ENCODE measurements at regions of chr12 and their contacts with region 1.

Region 1: GRCh38 chr12:8890313-8891085 is 23.8 kb upstream of the PHC1 start:
- DNase-seq: peak; percentile 10
- H3K4me3 ChIP-seq: peak overlapping the region; percentile 61
- H3K27ac ChIP-seq: no peak overlapping the region
- H3K27me3 ChIP-seq: no peaks in the 10 kb centered on the region
- CTCF ChIP-seq: peak; percentile 92

Region 2: DNA sequence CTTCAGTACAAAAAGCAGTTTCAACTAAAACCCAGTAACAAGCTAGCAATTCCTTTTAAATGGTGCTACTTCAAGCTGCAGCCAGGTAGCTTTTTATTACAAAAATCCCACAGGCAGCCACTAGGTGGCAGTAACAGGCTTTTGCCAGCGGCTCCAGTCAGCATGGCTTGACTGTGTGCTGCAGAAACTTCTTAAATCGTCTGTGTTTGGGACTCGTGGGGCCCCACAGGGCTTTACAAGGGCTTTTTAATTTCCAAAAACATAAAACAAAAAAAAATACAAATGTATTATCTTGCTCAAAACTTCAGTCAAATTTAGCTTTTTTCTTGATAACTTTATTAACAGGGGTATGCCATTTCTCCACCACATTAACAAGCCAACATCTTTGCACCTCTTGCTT is 346.2 kb before region 1 on chr12:
- CTCF ChIA-PET with region 1: interaction called, 12 read pairs
- POLR2A ChIA-PET with region 1: no interaction called
- DNase-seq: peak; percentile 26
- H3K4me3 ChIP-seq: no peak overlapping the region
- H3K27ac ChIP-seq: no peak overlapping the region
- H3K27me3 ChIP-seq: no peaks in the 10 kb centered on the region
- CTCF ChIP-seq: peak; percentile 94

Region 3: DNA sequence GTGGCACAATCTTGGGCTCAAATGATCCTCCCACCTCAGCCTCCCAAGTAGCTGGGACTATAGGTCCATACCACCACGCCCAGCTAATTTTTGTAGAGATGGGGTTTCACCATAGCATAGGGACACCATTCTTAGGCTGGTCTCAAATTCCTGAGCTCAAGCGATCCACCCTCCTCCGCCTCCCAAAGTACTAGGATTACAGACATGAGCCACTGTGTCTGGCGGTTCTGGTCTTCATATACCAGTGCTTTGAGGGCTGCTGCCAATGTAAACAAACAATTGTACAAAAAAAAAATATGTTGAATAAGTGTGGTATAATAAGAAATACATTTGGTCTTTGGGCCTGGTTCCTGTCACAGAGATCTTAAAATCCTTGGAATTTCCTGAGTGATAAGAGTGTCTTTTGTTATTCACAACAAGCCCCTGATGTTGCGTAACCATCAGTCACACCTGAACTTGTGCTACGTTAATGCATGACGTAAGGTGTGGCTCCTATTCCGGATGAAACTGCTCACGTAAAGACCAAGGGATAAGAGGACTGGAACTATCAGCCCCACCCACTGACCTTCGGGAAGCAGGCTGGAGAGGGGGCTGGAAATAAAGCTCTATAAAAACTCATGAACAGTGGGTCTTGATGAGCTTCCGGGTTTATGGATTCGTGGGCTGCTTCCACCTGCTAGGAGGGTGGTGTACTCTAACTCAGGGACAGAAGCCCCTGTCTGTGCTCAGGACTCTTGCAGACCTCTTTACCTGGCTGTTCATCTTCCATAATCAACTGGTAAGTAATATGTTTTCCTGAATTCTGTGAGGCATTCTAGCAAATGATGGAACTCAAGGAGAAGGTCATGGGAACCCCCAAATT is 209.2 kb before region 1 on chr12:
- CTCF ChIA-PET with region 1: interaction called, 138 read pairs
- POLR2A ChIA-PET with region 1: interaction called, 5 read pairs
- DNase-seq: no peak
- H3K4me3 ChIP-seq: no peak overlapping the region
- H3K27ac ChIP-seq: no peak overlapping the region
- H3K27me3 ChIP-seq: peaks cover 3% of the 10 kb centered on the region
- CTCF ChIP-seq: no peak

Region 4: DNA sequence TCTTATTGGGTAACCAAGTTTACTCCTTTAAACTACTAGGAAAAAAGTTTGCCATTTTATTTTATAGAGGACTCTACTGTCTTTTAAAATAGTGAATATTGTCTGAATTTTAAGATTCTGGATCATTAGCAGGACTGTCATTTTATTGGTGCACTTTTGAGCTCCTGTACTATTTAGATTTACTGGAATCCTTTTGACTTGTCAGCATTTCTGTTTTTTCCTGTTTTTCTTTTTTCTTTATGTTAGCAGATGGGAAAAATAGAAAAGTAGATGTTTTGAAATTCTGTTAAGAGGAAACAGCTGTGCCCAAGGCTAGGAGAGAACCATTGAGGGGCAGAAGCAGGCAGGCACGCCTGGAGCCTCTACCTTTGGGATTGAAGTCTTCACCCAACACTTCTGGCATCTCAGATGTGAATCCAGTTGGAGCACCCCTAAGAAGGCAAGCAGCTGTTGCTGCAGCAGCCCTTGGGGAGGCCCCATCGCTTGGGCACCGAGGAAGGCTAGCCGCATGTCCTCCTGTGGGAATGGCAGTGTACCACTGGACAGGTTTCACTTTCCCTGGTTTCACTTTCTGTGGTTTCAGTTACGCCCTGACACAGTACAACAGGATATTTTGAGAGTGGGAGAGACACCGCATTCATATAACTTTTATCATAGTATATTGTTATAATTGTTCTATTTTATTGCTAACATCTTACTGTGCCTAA is 181.2 kb before region 1 on chr12:
- CTCF ChIA-PET with region 1: interaction called, 15 read pairs
- POLR2A ChIA-PET with region 1: no interaction called
- DNase-seq: no peak
- H3K4me3 ChIP-seq: no peak overlapping the region
- H3K27ac ChIP-seq: no peak overlapping the region
- H3K27me3 ChIP-seq: no peaks in the 10 kb centered on the region
- CTCF ChIP-seq: no peak

Region 5: DNA sequence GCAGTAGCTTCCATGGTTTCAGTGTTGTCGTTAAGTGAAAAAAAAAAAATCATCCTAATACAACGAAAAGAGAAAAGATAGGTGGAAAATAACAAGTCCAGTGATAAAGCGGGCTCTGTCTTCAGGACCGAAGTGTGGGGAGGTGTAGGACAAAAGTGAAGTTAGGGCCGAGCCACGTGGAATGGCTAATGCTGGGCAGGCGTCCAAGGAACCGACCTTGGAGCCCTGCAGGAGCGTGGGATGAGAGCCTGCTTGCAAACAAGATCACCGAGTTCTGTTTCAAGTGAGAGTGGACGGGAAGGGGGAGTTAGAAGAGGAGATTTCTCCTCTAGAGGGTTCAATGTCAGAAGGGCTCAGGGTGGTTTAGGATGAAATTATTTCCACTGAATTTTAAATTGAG is 45.8 kb before region 1 on chr12:
- CTCF ChIA-PET with region 1: no interaction called
- POLR2A ChIA-PET with region 1: no interaction called
- DNase-seq: no peak
- H3K4me3 ChIP-seq: no peak overlapping the region
- H3K27ac ChIP-seq: no peak overlapping the region
- H3K27me3 ChIP-seq: peaks cover 3% of the 10 kb centered on the region
- CTCF ChIP-seq: no peak

Region 6: DNA sequence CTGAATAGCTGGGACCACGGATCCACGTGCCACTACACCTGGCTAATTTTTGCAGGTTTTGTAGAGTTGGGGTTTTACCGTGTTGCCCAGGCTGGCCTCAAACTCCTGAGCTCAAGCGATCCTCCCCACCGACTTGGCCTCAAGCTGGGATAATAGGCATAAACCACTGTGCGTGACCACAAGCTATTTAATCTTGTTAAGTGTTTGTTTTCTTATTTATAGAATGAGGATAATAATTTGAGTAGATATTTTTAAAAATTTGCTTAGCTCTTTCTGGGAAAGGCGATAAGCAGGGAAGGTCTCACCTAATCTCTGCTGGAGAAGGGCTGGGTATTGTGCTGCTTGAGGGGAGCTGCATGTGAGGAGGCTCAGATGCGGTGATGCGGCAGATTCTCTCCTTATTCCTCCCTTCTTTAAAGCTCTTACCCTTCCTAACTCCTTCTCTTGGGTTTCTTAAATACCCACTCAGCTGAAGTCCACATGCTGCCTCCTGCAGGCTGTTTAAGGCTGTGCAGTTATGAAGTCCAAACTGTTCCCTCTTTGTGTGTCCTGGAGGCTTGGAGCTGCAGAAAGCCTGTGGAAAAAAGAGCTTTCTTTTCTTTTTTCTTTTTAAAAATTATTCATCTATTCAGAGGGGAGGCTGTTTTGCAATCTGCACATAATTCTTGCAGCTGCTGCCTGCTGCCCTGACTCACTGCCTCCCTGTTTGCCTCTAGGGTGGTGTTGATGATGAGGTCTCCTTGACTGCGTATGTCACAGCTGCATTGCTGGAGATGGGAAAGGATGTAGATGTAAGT is 30.1 kb before region 1 on chr12:
- CTCF ChIA-PET with region 1: interaction called, 21 read pairs
- POLR2A ChIA-PET with region 1: no interaction called
- DNase-seq: no peak
- H3K4me3 ChIP-seq: no peak overlapping the region
- H3K27ac ChIP-seq: no peak overlapping the region
- H3K27me3 ChIP-seq: no peaks in the 10 kb centered on the region
- CTCF ChIP-seq: peak; percentile 66

Region 7: GRCh38 chr12:8912914-8913313 is 22.4 kb after region 1 on chr12:
- CTCF ChIA-PET with region 1: interaction called, 24 read pairs
- POLR2A ChIA-PET with region 1: no interaction called
- DNase-seq: no peak
- H3K4me3 ChIP-seq: no peak overlapping the region
- H3K27ac ChIP-seq: no peak overlapping the region
- H3K27me3 ChIP-seq: no peaks in the 10 kb centered on the region
- CTCF ChIP-seq: 0 out of 2 replicates have a peak, but pooled peaks have one; percentile 10

Region 8: GRCh38 chr12:9049520-9050133 is 159.1 kb after region 1 on chr12:
- CTCF ChIA-PET with region 1: interaction called, 20 read pairs
- POLR2A ChIA-PET with region 1: no interaction called
- DNase-seq: peak; percentile 11
- H3K4me3 ChIP-seq: no peak overlapping the region
- H3K27ac ChIP-seq: no peak overlapping the region
- H3K27me3 ChIP-seq: no peaks in the 10 kb centered on the region
- CTCF ChIP-seq: peak; percentile 54